Vagina (tissue), 2 donors: ENCODE measurements at regions of chr1 and their contacts with region 1.

Region 1: DNA sequence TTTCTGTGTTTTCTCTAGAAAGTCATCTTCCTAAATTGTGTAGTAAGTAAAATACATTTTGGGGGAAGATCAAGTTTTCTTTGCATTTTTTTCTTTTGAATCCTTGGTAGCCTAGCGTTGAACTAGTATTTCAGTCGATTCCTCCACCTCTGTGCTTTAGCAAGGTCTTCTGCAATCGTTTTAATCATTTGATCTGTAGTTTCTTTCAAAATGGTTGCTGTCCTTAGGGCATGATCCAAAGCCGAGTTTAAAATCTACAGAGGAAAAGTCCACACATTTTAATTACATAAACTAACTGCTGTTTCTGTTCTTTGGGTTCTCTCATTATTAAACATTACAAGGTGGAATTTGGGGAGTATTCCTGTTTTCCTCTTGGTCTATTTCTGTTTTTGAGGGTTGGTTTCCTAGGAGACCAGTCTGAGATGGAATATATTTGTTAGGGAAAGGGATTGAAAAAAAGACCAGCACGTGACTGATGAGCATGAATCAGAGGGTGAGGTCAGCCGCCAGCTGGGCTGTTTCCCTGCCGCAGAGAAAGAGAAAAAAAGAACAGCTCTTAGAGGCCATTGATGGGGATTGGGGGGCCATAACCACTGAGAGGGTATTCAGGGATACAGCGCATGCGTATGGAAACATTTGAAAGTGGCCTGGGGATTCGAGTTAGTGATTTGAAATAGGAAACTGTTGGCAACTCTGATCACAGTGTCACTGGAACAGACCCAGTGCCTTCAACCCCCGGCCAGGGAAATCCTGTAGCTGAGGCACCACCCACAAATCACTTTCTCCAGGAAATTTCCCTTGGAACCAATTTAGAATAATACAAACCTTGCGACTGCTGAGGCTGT is 40.6 kb downstream of the AKNAD1 start:
- DNase-seq: no peak
- H3K4me3 ChIP-seq: peak overlapping the region; percentile 12 to 23
- H3K27ac ChIP-seq: peak overlapping the region; percentile 78
- H3K4me1 ChIP-seq: peaks cover 48% of the 10 kb centered on the region
- H3K27me3 ChIP-seq: no peaks in the 10 kb centered on the region
- CTCF ChIP-seq: no peak
- POLR2A ChIP-seq: no peak

Region 2: DNA sequence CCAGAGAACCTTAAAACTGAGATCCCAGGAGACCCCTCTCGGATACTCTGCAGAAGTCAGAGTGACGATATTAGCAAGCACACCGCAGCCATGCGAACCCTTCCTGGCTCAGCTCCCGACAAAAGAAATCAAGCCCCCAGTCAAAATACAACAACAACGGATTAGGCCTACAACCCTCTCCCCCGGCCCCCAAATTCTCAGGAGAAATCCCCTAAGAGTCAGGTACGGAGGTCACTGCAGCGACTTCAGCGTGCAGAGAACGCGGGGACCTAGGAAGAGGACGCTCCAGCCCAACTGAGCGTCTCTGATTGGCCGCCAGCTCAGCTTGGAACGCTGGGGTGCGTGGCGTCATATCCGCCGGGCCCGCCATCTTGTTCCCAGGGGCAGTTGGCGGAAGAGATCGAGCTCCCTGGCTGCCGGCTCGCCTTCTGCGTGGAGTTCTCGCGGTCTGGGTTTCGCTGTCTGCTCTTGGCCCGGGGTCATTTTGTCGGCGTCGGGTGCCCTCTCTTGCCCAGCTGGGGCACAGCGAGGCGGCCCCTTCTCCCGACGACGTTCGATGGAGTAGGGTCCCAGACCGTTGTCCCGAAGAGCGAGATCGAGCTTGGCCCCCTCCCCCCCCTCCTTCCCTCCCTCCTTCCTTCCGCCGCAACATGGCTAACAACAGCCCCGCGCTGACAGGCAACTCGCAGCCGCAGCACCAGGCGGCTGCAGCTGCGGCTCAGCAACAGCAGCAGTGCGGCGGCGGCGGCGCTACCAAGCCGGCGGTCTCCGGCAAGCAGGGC is 124.1 kb before region 1 on chr1 and contains the start of gene PRPF38B:
- intact Hi-C with region 1: loop called (anchors 5 kb)
- DNase-seq: peak in 1 of 2 donors; percentile 93
- H3K4me3 ChIP-seq: peak within 1 kb of the TSS; percentile 73 to 90
- H3K27ac ChIP-seq: peak within 1 kb of the TSS; percentile 92
- H3K4me1 ChIP-seq: peaks cover 39% of the 10 kb centered on the region
- H3K27me3 ChIP-seq: no peaks in the 10 kb centered on the region
- CTCF ChIP-seq: no peak
- POLR2A ChIP-seq: peak in 1 of 2 donors; percentile 82
- total RNA-seq, gene PRPF38B: 27.0 TPM

Region 3: GRCh38 chr1:108708691-108709660 is 107.3 kb before region 1 on chr1:
- intact Hi-C with region 1: no loop called
- DNase-seq: no peak
- H3K4me3 ChIP-seq: no peak overlapping the region
- H3K27ac ChIP-seq: no peak overlapping the region
- H3K4me1 ChIP-seq: peaks cover 12% of the 10 kb centered on the region
- H3K27me3 ChIP-seq: no peaks in the 10 kb centered on the region
- CTCF ChIP-seq: no peak
- POLR2A ChIP-seq: no peak